Posterior vena cava (tissue), 2 donors: ENCODE measurements at regions of chr9 and their contacts with region 1.

Region 1: DNA sequence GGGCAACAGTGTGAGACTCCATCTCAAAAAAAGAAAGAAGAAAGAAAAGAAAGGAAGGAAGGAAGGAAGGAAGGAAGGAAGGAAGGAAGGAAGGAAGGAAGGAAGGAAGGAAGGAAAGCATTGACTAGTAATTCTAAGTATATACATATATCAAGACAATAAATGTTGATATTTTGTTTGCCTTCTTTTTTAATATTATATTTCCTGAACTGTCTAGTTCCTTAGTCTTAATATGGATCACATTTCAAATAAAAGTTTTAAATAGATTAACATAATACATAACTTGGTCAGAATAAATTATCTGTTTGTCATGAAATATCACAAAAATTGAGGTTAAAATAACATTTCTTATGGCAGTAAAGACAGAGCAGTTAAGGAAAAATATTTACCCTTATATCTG is 1448.4 kb upstream of the C9orf72 start:
- DNase-seq: no peak

Region 2: GRCh38 chr9:29006628-29007027 is 15.0 kb before region 1 on chr9:
- intact Hi-C with region 1: loop called in 1 of 2 experiments (anchors 2 kb)
- DNase-seq: no peak